ENCODE measurements at regions of chr17 and their contacts with region 1.

Region 1: DNA sequence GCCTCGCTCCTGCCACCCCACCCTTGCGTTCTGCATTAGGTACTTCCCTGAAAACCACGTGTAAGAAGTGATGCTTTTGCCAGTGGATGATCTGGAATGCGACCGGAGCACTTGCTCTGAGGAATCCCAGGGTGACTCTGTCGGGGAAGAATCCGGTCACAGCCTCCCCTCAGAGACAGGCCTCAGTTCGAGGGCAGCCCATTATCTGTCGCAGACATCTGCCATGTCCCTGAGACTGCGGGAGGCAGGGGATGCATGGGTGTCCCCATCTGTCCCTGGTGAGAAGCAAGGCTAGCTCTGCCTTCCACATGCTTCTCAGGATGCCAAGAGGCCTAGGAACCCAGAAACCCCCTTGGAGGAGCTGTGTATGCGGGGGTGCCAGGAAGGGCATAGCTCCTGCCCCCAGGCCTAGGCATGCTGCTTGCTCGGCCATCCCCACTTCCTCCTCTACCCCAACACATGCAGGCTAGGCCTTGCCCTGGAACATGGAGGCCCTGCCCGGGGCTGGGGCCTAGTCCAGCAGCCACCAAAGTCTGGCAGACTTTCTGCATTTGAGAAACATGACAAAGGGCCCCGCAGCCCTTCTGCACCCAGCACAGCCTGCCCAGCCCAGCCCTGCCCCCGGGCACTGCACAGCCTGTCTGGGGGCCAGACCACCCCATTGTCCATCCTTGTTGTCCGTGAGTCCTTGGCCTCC is 20.5 kb downstream of the MNT start:
- DNase-seq: no peak
- ATAC-seq: no peak
- H3K4me3 ChIP-seq: no peak overlapping the region
- H3K4me3 Mint-ChIP-seq: no peak overlapping the region
- H3K27ac ChIP-seq: no peak overlapping the region
- H3K27ac Mint-ChIP-seq: no peak overlapping the region
- H3K4me1 ChIP-seq: peaks cover 11% of the 10 kb centered on the region
- H3K4me1 Mint-ChIP-seq: peaks cover 6% of the 10 kb centered on the region
- H3K27me3 ChIP-seq: no peaks in the 10 kb centered on the region
- H3K27me3 Mint-ChIP-seq: no peaks in the 10 kb centered on the region
- CTCF ChIP-seq: no peak

Region 2: GRCh38 chr17:2401426-2402221 is 21.2 kb after region 1 on chr17:
- CTCF ChIA-PET with region 1: interaction called, 52 read pairs
- POLR2A ChIA-PET with region 1: interaction called, 69 read pairs
- intact Hi-C with region 1: loop called in 1 of 2 experiments (anchors 1 kb)
- DNase-seq: peak; percentile 97 to 99 (median 99)
- ATAC-seq: peak; percentile 58
- H3K4me3 ChIP-seq: peak overlapping the region; percentile 93
- H3K4me3 Mint-ChIP-seq: peak overlapping the region; percentile 100
- H3K27ac ChIP-seq: peak overlapping the region; percentile 93 to 100
- H3K27ac Mint-ChIP-seq: peak overlapping the region; percentile 99
- H3K4me1 ChIP-seq: peaks cover 51% of the 10 kb centered on the region
- H3K4me1 Mint-ChIP-seq: peaks cover 47% of the 10 kb centered on the region
- H3K27me3 ChIP-seq: no peaks in the 10 kb centered on the region
- H3K27me3 Mint-ChIP-seq: no peaks in the 10 kb centered on the region
- CTCF ChIP-seq: no peak